Testis (tissue), 5 donors: ENCODE measurements at regions of chr22 and their contacts with region 1.

Region 1: DNA sequence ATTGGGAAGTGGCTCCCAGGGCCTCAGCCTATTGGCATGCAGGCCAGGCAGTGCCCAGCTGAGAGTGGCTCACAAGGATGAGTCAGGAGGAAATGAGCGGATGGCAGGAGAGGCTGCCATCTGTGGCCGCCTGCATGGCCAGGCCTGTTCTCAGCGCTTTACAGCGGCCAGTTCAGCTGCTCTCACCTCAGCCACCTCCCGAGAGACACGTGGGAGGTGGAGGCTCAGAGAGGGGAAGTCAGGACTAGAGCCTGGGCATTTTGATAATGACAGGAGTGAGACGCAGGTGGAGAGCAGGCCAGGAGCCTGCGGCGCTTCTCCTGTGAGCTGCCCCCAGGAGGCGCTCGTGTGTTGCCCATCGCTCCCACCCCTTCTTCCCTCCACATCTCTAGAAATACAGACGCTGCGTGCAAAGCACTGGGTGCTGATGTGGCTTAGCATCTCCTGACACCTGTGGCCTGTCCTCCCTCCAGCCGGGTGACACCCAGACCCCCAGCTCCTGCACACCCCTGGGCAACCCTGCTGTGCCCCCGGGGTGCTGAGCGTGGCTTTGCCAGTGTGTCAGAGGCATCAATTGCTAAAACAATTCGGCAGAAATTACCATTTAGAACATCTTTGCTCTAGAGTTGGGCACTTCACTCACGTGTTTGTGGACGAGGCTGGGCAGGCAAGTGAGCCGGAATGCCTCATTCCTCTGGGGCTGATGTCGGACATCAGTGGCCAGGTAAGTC is 21.4 kb upstream of the PANX2 start:
- DNase-seq: peak; percentile 48
- H3K4me3 ChIP-seq: no peak overlapping the region
- H3K27ac ChIP-seq: no peak overlapping the region
- H3K4me1 ChIP-seq: peaks cover 8% of the 10 kb centered on the region
- H3K27me3 ChIP-seq: no peaks in the 10 kb centered on the region
- CTCF ChIP-seq: peak; percentile 21 to 55 (median 42)
- POLR2A ChIP-seq: no peak

Region 2: GRCh38 chr22:50200461-50201190 is 51.5 kb after region 1 on chr22 and contains the start of gene SELENOO:
- intact Hi-C with region 1: loop called (anchors 10 kb)
- DNase-seq: peak; percentile 93
- H3K4me3 ChIP-seq: peak within 1 kb of the TSS; percentile 77 to 82
- H3K27ac ChIP-seq: peak within 1 kb of the TSS; percentile 70 to 90
- H3K4me1 ChIP-seq: peaks cover 20% of the 10 kb centered on the region
- H3K27me3 ChIP-seq: no peaks in the 10 kb centered on the region
- CTCF ChIP-seq: no peak
- POLR2A ChIP-seq: peak; percentile 80
- total RNA-seq, gene SELENOO: 57.9 to 66.8 TPM